PC-3 (cell line): ENCODE measurements at regions of chr18 and their contacts with region 1.

Region 1: DNA sequence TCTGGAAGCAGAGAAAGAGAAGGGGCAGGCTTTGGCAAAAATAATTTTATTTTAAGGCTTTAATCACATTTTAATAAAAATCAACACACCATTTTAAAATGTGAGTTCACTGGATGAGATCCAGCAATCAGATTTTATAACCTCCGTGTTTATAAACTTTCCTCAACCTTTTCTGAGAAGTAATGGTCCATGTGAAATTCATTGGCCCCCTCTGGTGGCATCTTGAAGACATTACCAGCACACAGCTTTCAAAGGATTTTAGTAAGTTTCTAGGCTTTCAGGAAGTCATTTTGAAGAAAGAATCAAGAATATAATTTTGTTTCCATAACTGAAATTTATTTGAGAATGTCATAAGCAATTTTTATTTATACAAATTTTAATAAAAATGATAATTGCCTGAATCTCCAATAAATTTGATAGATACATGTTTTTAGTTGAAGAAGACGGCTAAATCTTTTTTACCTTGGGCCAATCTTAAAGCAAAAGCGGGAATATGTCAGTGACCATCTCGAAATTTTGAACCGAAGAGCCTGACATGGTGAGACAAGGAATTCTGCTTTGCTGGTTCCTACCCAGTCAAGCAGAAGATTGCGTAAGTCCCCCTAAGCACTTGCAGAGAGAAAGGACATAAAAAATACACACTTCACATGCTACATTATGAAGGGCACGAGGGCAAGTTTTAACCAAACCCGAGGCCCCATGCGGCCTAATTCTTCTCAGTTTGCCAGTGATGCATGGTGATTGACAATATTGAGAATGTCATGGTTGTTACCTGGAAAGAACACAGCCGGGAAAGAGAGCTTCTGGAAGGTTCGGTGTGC is 128.4 kb upstream of the CBLN2 start:
- DNase-seq: peak; percentile 62
- ATAC-seq: peak; percentile 38; the same call in 1 of the 2 replicates
- H3K4me3 ChIP-seq: no peak overlapping the region
- H3K27ac ChIP-seq: no peak overlapping the region
- H3K4me1 ChIP-seq: no peaks in the 10 kb centered on the region
- H3K27me3 ChIP-seq: peaks cover 26% of the 10 kb centered on the region
- CTCF ChIP-seq: peak; percentile 83

Region 2: GRCh38 chr18:72652990-72653593 is 19.5 kb before region 1 on chr18:
- CTCF ChIA-PET with region 1: interaction called, 4 read pairs
- POLR2A ChIA-PET with region 1: no interaction called
- intact Hi-C with region 1: loop called (anchors 1 kb)
- DNase-seq: peak; percentile 65
- ATAC-seq: peak; percentile 57; the same call in 1 of the 2 replicates
- H3K4me3 ChIP-seq: no peak overlapping the region
- H3K27ac ChIP-seq: no peak overlapping the region
- H3K4me1 ChIP-seq: no peaks in the 10 kb centered on the region
- H3K27me3 ChIP-seq: peaks cover 30% of the 10 kb centered on the region
- CTCF ChIP-seq: peak; percentile 68

Region 3: DNA sequence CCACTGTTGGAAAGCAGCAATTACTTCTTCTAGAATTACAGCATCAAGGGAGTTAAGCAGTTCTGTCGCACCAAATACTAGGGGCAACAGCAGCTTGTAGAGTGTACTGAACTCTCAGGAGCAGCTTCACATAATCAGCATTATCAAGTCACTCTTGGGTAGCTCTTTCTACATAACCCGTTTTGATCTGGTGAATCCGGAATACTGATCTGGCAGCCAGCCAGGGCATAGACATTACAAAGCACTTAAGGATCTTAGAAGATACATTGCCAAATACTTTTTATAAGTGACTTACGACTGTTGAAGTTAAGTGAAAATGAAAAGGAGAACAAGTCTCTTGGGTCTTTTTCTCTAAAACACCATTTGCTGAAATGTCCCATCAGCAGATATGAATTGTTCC is 268.4 kb after region 1 on chr18:
- CTCF ChIA-PET with region 1: no interaction called
- POLR2A ChIA-PET with region 1: no interaction called
- intact Hi-C with region 1: no loop called
- DNase-seq: peak; percentile 12
- ATAC-seq: no peak
- H3K4me3 ChIP-seq: no peak overlapping the region
- H3K27ac ChIP-seq: no peak overlapping the region
- H3K4me1 ChIP-seq: no peaks in the 10 kb centered on the region; the same call in 1 of the 2 replicates
- H3K27me3 ChIP-seq: no peaks in the 10 kb centered on the region
- CTCF ChIP-seq: no peak